ENCODE measurements at regions of chr9 and their contacts with region 1.

Region 1: GRCh38 chr9:98074115-98074990 is 17.8 kb downstream of the NANS start:
- DNase-seq: no peak
- ATAC-seq: peak; percentile 81
- H3K4me3 ChIP-seq: no peak overlapping the region
- H3K27ac ChIP-seq: no peak overlapping the region
- H3K4me1 ChIP-seq: no peaks in the 10 kb centered on the region
- H3K27me3 ChIP-seq: no peaks in the 10 kb centered on the region
- CTCF ChIP-seq: peak; percentile 85 to 95 (median 94)
- EP300 ChIP-seq: no peak
- POLR2A ChIP-seq: no peak
- RAD21 ChIP-seq: peak; percentile 90

Region 2: DNA sequence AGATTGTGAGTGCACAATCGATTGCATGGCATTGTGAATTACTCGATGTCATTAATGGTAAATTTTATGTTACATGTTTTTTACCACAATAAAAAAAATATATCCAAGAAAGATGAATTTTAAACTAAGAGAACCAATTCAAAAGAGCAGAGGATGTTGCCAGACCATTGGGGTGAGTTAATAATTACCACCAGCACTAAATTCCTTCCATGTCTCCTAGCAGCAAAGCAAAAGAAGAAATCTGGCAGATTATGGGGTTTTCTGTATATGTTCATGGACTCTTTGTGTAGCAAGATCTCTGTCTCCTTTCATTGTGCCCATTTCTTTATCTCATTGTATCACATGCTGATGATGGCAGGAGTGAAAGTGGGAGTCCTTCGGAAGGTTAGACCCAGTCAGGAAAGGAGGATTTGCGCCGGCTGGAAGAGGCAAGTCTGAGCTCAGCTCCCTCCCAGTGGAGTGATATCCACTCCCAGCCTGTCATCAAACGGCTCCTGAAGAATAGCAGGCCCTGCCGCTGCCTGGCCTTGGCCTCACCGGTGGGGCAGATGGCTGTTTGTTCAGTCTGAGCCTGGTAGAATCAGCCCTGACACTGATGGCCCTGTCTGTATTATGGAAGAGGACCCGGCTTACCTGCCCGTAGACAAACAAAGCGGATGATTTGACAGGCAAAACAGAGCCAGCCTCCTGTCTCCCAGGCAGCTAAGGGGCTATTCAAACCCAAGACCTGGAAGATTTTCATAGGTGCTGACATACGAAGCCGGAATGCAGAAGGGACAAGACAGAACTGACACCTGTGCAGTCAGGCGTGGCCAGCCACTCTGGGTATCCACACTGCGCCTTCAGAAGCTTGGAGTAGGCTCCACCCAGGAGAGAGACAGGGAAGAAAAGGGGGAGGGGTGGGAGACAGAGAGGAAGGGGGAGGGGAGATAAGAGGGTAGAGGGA is 243.2 kb before region 1 on chr9:
- CTCF ChIA-PET with region 1: no interaction called
- POLR2A ChIA-PET with region 1: no interaction called
- RAD21 ChIA-PET with region 1: no interaction called
- SMC1A ChIA-PET with region 1: no interaction called
- in situ Hi-C with region 1: no loop called
- intact Hi-C with region 1: no loop called
- DNase-seq: no peak
- ATAC-seq: no peak
- H3K4me3 ChIP-seq: no peak overlapping the region
- H3K27ac ChIP-seq: no peak overlapping the region
- H3K4me1 ChIP-seq: peaks cover 3% of the 10 kb centered on the region; the same call in 1 of the 2 replicates
- H3K27me3 ChIP-seq: no peaks in the 10 kb centered on the region
- CTCF ChIP-seq: no peak
- EP300 ChIP-seq: no peak
- POLR2A ChIP-seq: no peak
- RAD21 ChIP-seq: no peak

Region 3: DNA sequence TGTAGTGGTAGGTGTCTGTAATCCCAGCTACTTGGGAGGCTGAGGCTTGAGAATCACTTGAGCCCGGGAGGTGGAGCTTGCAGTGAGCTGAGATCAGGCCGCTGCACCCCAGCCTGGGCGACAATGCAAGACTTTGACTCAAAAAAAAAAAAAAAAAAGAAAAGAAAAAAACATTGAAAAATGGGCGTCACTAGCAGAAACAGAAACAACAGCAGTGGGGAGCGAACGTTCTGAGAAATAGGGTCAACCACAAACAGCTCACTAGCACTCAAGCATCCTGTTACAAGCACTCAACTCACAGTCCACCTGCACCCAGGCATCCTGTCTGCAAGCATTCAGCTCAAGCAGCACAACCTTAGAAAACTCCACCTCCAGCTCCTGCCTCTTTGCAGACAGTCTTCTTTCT is 27.5 kb after region 1 on chr9:
- CTCF ChIA-PET with region 1: interaction called, 26 read pairs
- POLR2A ChIA-PET with region 1: no interaction called
- RAD21 ChIA-PET with region 1: interaction called, 3 read pairs
- SMC1A ChIA-PET with region 1: interaction called, 14 read pairs
- in situ Hi-C with region 1: no loop called
- intact Hi-C with region 1: no loop called
- DNase-seq: peak; percentile 99
- ATAC-seq: peak; percentile 90
- H3K4me3 ChIP-seq: peak overlapping the region; percentile 31; the same call in 1 of the 2 replicates
- H3K27ac ChIP-seq: peak overlapping the region; percentile 75
- H3K4me1 ChIP-seq: peaks cover 87% of the 10 kb centered on the region
- H3K27me3 ChIP-seq: no peaks in the 10 kb centered on the region
- CTCF ChIP-seq: no peak
- EP300 ChIP-seq: peak; percentile 80 to 82
- POLR2A ChIP-seq: peak; percentile 65
- RAD21 ChIP-seq: no peak

Region 4: DNA sequence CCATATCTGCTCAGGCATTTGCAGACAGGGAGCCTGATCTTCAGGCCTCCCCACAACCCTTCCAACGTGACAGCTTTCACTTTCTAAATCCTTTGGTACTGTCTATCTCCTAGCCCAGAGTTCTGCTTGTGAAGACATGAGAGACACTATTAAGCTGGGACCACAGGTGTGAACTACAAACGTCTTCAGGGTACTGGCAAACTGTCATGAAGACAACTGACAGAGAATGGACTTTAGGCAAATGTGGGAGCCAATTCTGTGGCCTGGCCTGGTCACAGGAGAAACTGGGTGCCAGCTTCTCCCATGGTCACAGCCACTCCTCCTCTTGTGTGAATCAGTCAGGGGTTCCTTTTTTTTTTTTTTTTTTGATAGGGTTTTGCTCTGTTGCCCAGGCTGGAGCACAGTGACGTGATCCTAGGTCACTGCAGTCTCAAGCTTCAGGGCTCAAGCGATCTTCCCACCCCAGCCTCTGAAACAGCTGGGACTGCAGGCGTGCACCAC is 34.2 kb after region 1 on chr9:
- CTCF ChIA-PET with region 1: interaction called, 14 read pairs
- POLR2A ChIA-PET with region 1: interaction called, 6 read pairs
- RAD21 ChIA-PET with region 1: interaction called, 3 read pairs
- SMC1A ChIA-PET with region 1: interaction called, 3 read pairs
- in situ Hi-C with region 1: no loop called
- intact Hi-C with region 1: no loop called
- DNase-seq: peak; percentile 80
- ATAC-seq: peak; percentile 81
- H3K4me3 ChIP-seq: peak overlapping the region; percentile 19; the same call in 1 of the 2 replicates
- H3K27ac ChIP-seq: peak overlapping the region; percentile 91
- H3K4me1 ChIP-seq: peaks cover 62% of the 10 kb centered on the region
- H3K27me3 ChIP-seq: no peaks in the 10 kb centered on the region
- CTCF ChIP-seq: no peak
- EP300 ChIP-seq: peak in 1 of 2 experiments; percentile 23; a peak in 1 of 4 replicates
- POLR2A ChIP-seq: no peak
- RAD21 ChIP-seq: no peak

Region 5: GRCh38 chr9:98146101-98146991 is 72.0 kb after region 1 on chr9:
- CTCF ChIA-PET with region 1: no interaction called
- POLR2A ChIA-PET with region 1: no interaction called
- RAD21 ChIA-PET with region 1: no interaction called
- SMC1A ChIA-PET with region 1: no interaction called
- in situ Hi-C with region 1: no loop called
- intact Hi-C with region 1: no loop called
- DNase-seq: peak; percentile 36
- ATAC-seq: peak; percentile 77
- H3K4me3 ChIP-seq: no peak overlapping the region
- H3K27ac ChIP-seq: peak overlapping the region; percentile 65
- H3K4me1 ChIP-seq: peaks cover 29% of the 10 kb centered on the region
- H3K27me3 ChIP-seq: no peaks in the 10 kb centered on the region
- CTCF ChIP-seq: no peak
- EP300 ChIP-seq: no peak
- POLR2A ChIP-seq: no peak
- RAD21 ChIP-seq: no peak

Region 6: DNA sequence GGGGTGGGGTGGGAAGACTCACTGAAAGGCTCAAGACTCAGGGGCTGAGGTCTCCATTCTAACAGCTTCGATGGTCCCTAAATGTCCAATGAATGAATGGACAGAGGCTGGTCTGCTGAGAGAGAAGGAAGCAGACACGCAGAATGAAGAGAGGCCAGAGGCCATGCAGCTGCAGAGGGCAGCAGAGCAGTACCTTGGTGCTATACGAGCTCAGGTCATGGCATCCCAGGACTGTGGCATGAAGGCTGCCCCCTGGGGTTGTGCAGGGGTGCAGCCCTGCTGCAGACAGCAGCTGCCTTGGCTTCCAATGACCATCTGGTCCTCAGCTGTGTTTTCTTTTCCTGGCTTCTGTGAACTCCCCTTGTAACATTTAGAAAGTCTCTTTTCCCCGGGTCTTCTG is 133.3 kb after region 1 on chr9:
- CTCF ChIA-PET with region 1: interaction called, 13 read pairs
- POLR2A ChIA-PET with region 1: interaction called, 3 read pairs
- RAD21 ChIA-PET with region 1: interaction called, 6 read pairs
- SMC1A ChIA-PET with region 1: interaction called, 3 read pairs
- in situ Hi-C with region 1: no loop called
- intact Hi-C with region 1: loop called (anchors 1 kb)
- DNase-seq: no peak
- ATAC-seq: no peak
- H3K4me3 ChIP-seq: no peak overlapping the region
- H3K27ac ChIP-seq: no peak overlapping the region
- H3K4me1 ChIP-seq: no peaks in the 10 kb centered on the region; the same call in 1 of the 2 replicates
- H3K27me3 ChIP-seq: no peaks in the 10 kb centered on the region; a peak in 1 of 4 replicates
- CTCF ChIP-seq: no peak
- EP300 ChIP-seq: no peak
- POLR2A ChIP-seq: no peak
- RAD21 ChIP-seq: no peak

Region 7: GRCh38 chr9:98215821-98216220 is 141.5 kb after region 1 on chr9:
- CTCF ChIA-PET with region 1: no interaction called
- POLR2A ChIA-PET with region 1: interaction called, 3 read pairs
- RAD21 ChIA-PET with region 1: no interaction called
- SMC1A ChIA-PET with region 1: no interaction called
- in situ Hi-C with region 1: no loop called
- intact Hi-C with region 1: loop called (anchors 2 kb)
- DNase-seq: no peak
- ATAC-seq: peak; percentile 85
- H3K4me3 ChIP-seq: no peak overlapping the region
- H3K27ac ChIP-seq: no peak overlapping the region
- H3K4me1 ChIP-seq: no peaks in the 10 kb centered on the region
- H3K27me3 ChIP-seq: no peaks in the 10 kb centered on the region
- CTCF ChIP-seq: peak; percentile 37 to 50 (median 48); a peak in 5 of 6 replicates
- EP300 ChIP-seq: no peak
- POLR2A ChIP-seq: no peak
- RAD21 ChIP-seq: 0 out of 2 replicates have a peak, but pooled peaks have one; percentile 46

Region 8: DNA sequence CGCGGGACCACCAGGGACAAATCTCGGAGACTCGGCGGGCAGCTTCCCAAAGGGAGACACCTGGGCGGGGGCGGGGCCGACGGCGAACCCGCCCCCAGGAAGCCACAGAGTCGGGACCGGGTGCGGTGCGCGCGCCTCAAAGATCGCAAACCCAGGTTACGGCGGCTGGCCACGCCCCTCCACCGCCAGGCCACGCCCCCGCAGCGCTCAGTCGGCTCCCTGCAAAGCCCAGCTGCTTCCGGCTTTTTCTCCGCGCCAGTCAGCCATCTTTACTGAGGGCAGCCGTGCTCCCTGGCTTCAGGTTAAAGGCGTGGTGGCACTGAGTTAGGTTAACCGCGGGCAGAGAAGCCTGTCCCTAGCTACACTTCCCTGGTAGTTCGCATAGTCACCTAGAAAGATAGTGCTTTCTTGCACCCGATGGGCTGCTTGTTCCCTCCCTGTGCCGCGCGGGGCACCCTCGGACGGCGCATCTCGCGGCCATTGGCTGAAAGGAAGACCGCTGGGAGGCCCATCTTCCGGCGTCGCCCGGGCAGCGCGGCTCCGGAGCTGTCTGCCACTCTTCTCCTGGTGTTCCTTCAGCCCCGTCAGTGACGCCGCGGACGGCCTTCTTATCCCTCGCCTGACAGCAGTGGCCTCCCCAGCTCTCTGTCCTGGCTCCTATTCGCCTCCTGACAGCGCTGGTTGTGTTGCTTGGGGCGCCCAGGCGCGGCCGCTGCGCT is 181.4 kb after region 1 on chr9 and contains the start of gene TBC1D2:
- CTCF ChIA-PET with region 1: interaction called, 17 read pairs
- POLR2A ChIA-PET with region 1: no interaction called
- RAD21 ChIA-PET with region 1: interaction called, 4 read pairs
- SMC1A ChIA-PET with region 1: interaction called, 13 read pairs
- in situ Hi-C with region 1: loop called (anchors 5 kb)
- intact Hi-C with region 1: no loop called
- DNase-seq: peak; percentile 85
- ATAC-seq: peak; percentile 94
- H3K4me3 ChIP-seq: peak within 1 kb of the TSS; percentile 75
- H3K27ac ChIP-seq: peak within 1 kb of the TSS; percentile 93
- H3K4me1 ChIP-seq: peaks cover 4% of the 10 kb centered on the region
- H3K27me3 ChIP-seq: no peaks in the 10 kb centered on the region
- CTCF ChIP-seq: peak; percentile 15 to 28 (median 21); a peak in 2 of 6 replicates
- EP300 ChIP-seq: no peak
- POLR2A ChIP-seq: peak; percentile 92
- RAD21 ChIP-seq: no peak
- polyA plus RNA-seq, gene TBC1D2: 0.04 to 0.06 TPM

Region 9: GRCh38 chr9:98263482-98264357 is 189.4 kb after region 1 on chr9:
- CTCF ChIA-PET with region 1: interaction called, 41 read pairs
- POLR2A ChIA-PET with region 1: no interaction called
- RAD21 ChIA-PET with region 1: interaction called, 3 read pairs
- SMC1A ChIA-PET with region 1: interaction called, 7 read pairs
- in situ Hi-C with region 1: loop called (anchors 5 kb)
- intact Hi-C with region 1: loop called (anchors 1 kb)
- DNase-seq: peak; percentile 40
- ATAC-seq: peak; percentile 100
- H3K4me3 ChIP-seq: no peak overlapping the region
- H3K27ac ChIP-seq: no peak overlapping the region
- H3K4me1 ChIP-seq: no peaks in the 10 kb centered on the region
- H3K27me3 ChIP-seq: no peaks in the 10 kb centered on the region
- CTCF ChIP-seq: peak; percentile 91 to 95 (median 93)
- EP300 ChIP-seq: no peak
- POLR2A ChIP-seq: no peak
- RAD21 ChIP-seq: peak; percentile 99